ENCODE measurements at regions of chr3 and their contacts with region 1.

Region 1: DNA sequence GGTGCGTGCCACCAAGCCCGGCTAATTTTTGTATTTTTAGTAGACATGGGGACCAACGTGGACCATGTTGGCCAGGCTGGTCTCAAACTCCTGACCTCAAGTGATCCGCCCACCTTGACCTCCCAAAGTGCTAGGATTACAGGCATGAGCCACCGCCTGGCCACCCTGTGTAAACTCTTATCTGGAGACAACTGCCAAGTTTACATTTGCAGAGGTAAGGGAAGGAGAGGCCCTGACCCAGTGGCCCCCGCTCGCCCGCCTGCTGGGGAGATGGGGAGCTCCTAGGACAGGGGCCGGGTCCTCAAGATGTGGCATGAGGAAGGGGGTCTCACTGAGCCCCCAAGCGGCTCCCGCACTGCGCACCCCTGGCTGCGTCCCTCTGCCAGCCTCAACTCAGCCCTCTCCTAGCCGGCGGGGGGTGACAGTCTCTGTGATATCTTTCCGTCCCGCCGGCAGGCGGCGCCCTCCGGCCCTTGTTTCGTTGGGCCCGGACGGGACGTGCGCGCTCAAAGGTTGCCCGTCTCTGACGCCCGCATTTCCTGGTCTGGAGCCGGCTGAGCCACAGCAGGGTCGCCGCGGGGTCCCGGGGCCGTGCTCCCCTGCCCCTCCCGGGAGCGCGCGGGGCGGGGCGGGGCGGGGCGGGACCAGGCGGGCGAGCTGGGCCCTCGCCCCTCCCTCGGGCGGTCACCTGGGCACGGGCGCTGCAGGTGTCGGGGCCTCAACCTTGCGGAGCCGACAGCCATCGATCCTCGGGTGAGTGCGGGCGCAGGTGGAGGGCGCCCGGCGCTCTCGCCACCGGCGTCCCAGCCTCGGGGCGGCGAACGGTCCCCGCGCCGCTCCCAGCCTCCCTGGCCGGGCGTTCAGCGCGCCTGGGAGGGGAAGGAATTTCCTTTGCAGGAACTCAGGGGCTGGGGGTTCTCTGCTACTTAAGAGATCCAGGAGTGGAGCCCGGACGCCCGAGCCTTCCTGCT is at the start of gene GPR160:
- DNase-seq: peak; percentile 82
- ATAC-seq: peak; percentile 75
- total RNA-seq, gene GPR160: 5.4 TPM

Region 2: GRCh38 chr3:171428321-171428787 is 1390.6 kb after region 1 on chr3:
- intact Hi-C with region 1: loop called (anchors 5 kb)
- DNase-seq: no peak
- ATAC-seq: no peak

Measured in sciatic nerve (tissue), 2 donors.